H1 (cell line): ENCODE measurements at regions of chr3 and their contacts with region 1.

Region 1: DNA sequence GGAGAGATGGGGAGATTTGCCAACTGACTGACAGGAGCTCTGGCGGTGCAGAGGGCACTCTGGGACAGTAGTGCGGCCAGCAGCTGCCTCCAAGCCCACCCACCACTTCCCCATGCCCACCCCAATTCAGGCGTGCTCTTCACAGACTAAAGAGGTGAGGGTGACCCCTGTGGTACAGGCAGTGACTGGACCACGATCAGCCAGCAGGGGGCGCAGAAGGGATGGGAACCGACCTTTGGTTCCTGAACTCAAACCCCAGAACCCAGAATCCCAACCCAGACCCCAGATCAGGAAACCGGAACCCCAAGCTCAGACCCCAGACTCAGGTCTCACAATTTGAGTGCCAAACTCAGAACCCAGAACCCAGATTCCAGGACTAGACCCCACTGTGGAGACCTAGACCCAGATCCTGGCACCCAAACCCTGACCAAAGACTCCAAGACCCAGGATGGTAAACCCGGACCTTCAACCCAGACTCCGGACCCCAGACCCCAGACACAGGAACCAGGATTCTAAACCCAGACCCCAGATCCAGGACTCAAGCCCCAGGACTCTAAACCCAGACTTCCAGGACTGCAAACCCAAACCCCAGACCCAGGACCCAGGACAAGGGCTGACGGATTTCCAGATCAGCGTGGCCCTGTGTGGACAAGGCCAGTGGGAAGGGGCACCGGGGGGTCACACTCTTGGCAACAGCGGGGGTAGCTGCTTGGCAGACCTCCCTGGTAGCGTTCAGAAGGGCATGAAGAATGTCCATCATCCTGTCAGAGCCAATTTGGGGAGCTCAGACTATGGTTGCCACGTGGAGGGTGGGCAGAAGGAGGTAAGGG is 3.7 kb upstream of the MYL3 start:
- DNase-seq: peak in 1 of 2 experiments; percentile 97
- H3K4me3 ChIP-seq: no peak overlapping the region
- H3K27ac ChIP-seq: no peak overlapping the region
- H3K4me1 ChIP-seq: no peaks in the 10 kb centered on the region; a peak in 1 of 7 replicates
- H3K27me3 ChIP-seq: peaks cover 0 to 7% (median 2%) of the 10 kb centered on the region in 4 experiments; a peak in 3 of 7 replicates
- CTCF ChIP-seq: peak in 2 of 3 experiments; percentile 92 to 97; a peak in 3 of 4 replicates
- EP300 ChIP-seq: no peak
- POLR2A ChIP-seq: no peak
- RAD21 ChIP-seq: peak; percentile 76 to 84

Region 2: DNA sequence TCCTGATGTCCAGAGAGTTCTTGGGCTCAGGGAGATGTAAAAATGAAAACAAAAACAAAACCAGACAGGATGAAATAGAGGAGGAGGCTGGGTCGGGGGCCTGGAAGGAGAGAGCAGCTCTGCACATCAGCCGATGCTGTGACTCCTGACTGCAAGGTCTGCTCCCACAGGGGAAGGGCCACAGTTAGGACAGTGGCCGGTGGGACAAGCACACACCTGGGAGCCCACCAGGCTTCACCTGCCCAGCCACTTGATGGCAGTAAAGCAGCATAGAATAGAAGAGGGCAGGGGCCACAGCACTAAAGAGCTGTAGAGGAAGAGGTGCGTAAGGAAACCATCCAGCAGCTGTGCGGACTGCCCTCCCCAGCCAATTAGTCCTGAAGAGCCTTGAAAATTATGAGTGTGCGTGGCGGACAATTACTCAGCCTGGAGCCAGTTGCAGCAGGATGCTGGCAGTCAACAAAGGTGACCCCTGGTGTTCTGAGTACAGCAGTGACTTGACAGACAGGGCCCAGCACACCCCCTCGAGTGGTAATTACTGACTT is 203.3 kb before region 1 on chr3:
- CTCF ChIA-PET with region 1: interaction called, 10 read pairs
- POLR2A ChIA-PET with region 1: no interaction called
- DNase-seq: peak in 1 of 2 experiments; percentile 62
- H3K4me3 ChIP-seq: no peak overlapping the region
- H3K27ac ChIP-seq: no peak overlapping the region
- H3K4me1 ChIP-seq: peaks cover 22 to 41% (median 28%) of the 10 kb centered on the region in 4 experiments
- H3K27me3 ChIP-seq: no peaks in the 10 kb centered on the region; a peak in 1 of 7 replicates
- CTCF ChIP-seq: peak in 2 of 3 experiments; percentile 63 to 70; a peak in 3 of 4 replicates
- EP300 ChIP-seq: no peak
- POLR2A ChIP-seq: no peak
- RAD21 ChIP-seq: peak; percentile 72 to 83

Region 3: GRCh38 chr3:46717447-46718231 is 149.3 kb before region 1 on chr3 and contains the start of gene PRSS50:
- CTCF ChIA-PET with region 1: interaction called, 17 read pairs
- POLR2A ChIA-PET with region 1: no interaction called
- DNase-seq: peak in 1 of 2 experiments; percentile 96
- H3K4me3 ChIP-seq: no peak within 1 kb of the TSS
- H3K27ac ChIP-seq: no peak within 1 kb of the TSS
- H3K4me1 ChIP-seq: no peaks in the 10 kb centered on the region; a peak in 1 of 7 replicates
- H3K27me3 ChIP-seq: no peaks in the 10 kb centered on the region; a peak in 2 of 7 replicates
- CTCF ChIP-seq: peak in 2 of 3 experiments; percentile 98 to 100; a peak in 3 of 4 replicates
- EP300 ChIP-seq: peak in 1 of 2 experiments; percentile 37; a peak in 1 of 3 replicates
- POLR2A ChIP-seq: no peak
- RAD21 ChIP-seq: peak; percentile 56 to 69; a peak in 3 of 4 replicates
- total RNA-seq, gene PRSS50: 0.47 and 0.73 TPM in 2 replicates

Region 4: DNA sequence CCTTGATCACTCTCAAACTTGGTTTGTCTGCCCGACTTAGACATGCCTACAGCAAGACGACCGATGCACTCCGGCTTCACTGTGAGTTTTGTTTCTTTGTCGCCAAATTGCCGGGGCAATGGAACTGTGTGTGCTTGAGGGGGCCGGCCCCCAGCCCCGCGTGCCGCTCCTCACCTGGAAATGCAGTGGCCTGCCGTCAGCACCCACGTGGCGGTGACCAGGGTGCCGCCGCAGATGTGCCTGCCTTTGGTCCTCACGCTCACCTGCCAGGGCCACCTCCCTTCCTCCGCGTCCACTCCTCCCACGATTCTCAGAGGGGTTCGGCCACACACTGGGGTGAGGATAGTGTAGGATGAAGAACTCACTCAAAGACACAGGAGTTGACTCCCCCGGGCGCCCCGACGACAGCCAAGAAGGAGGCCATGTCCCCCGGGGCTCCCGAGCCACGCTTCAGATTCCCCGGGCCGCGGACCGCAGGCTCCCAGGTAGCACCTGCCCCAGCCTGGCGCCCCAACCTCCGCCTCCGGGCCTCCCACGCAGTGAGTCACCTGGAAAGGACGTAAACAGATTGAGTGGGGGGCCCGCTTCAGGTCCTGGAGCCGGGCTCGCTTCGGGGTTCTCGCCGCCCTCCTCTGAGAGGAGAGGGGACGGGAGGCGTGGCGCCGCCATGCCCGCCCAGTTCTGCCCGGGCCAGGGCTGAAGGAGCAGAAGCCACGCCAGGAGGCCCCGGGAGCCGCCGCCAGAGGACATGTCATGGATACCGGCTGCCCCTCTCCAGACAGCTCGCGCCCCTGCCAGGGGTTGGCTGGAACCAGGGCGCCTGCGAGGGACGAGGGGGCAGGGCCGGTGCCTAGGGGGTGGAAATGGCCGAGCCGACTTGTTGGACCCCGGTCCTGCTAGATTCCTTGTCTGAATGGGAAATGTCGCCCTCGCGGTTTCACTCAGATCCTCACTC is 33.3 kb before region 1 on chr3:
- CTCF ChIA-PET with region 1: no interaction called
- POLR2A ChIA-PET with region 1: no interaction called
- DNase-seq: no peak
- H3K4me3 ChIP-seq: no peak overlapping the region
- H3K27ac ChIP-seq: no peak overlapping the region
- H3K4me1 ChIP-seq: peaks cover 0 to 3% (median 0%) of the 10 kb centered on the region in 4 experiments; a peak in 1 of 7 replicates
- H3K27me3 ChIP-seq: no peaks in the 10 kb centered on the region; a peak in 1 of 7 replicates
- CTCF ChIP-seq: no peak
- EP300 ChIP-seq: no peak
- POLR2A ChIP-seq: no peak
- RAD21 ChIP-seq: no peak

Region 5: DNA sequence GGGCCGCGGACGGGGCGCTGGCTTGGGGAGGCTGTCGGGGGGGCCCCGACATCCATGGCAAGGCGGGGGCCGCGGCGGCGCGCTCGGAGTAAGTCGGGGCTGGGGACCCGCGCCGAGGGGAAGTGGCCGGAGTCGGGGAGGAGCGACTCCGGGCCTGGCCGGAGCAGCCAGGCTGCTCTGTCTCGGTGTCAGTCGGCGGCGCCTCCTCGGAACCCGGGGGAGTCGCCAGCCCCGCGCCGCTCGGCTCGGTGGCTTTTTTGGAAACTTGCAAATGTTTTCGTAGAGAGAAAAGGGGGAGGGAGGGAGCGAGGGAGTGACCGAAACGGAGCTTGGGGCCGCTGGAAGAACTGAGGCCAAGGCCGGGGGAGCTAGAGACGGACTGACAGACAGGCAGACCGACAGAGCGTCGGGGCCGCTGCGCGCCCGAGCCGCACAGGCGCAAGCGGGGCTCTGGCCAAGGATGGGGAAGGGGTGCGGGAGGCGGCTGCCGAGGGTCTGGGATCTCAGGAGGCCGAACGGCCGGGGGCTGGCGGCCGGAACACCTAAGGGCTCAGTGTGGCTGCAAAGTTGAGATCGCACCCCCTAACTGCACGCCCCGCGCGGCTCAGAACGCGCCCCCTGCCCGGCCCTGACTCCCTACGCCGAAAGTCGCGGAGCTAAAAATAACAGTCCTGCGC is 15.6 kb after region 1 on chr3:
- CTCF ChIA-PET with region 1: interaction called, 88 read pairs
- POLR2A ChIA-PET with region 1: interaction called, 5 read pairs
- DNase-seq: peak in 1 of 2 experiments; percentile 78
- H3K4me3 ChIP-seq: peak overlapping the region; percentile 57 to 75 (median 64)
- H3K27ac ChIP-seq: no peak overlapping the region
- H3K4me1 ChIP-seq: peaks cover 0 to 10% (median 5%) of the 10 kb centered on the region in 4 experiments; a peak in 6 of 7 replicates
- H3K27me3 ChIP-seq: peaks cover 53 to 93% (median 84%) of the 10 kb centered on the region in 4 experiments
- CTCF ChIP-seq: no peak
- EP300 ChIP-seq: no peak
- POLR2A ChIP-seq: no peak
- RAD21 ChIP-seq: no peak

Region 6: GRCh38 chr3:46909535-46910442 is 42.9 kb after region 1 on chr3:
- CTCF ChIA-PET with region 1: interaction called, 22 read pairs
- POLR2A ChIA-PET with region 1: interaction called, 3 read pairs
- DNase-seq: peak; percentile 65 to 95
- H3K4me3 ChIP-seq: no peak overlapping the region
- H3K27ac ChIP-seq: no peak overlapping the region
- H3K4me1 ChIP-seq: peaks cover 0 to 3% (median 1%) of the 10 kb centered on the region in 4 experiments; a peak in 2 of 7 replicates
- H3K27me3 ChIP-seq: no peaks in the 10 kb centered on the region; a peak in 2 of 7 replicates
- CTCF ChIP-seq: peak in 2 of 3 experiments; percentile 88 to 97; a peak in 3 of 4 replicates
- EP300 ChIP-seq: no peak
- POLR2A ChIP-seq: no peak
- RAD21 ChIP-seq: peak; percentile 97 to 98

Region 7: GRCh38 chr3:46943237-46944187 is 76.6 kb after region 1 on chr3:
- CTCF ChIA-PET with region 1: no interaction called
- POLR2A ChIA-PET with region 1: no interaction called
- DNase-seq: no peak
- H3K4me3 ChIP-seq: no peak overlapping the region
- H3K27ac ChIP-seq: no peak overlapping the region
- H3K4me1 ChIP-seq: peaks cover 5 to 14% (median 9%) of the 10 kb centered on the region in 4 experiments; a peak in 5 of 7 replicates
- H3K27me3 ChIP-seq: no peaks in the 10 kb centered on the region
- CTCF ChIP-seq: no peak
- EP300 ChIP-seq: no peak
- POLR2A ChIP-seq: no peak
- RAD21 ChIP-seq: no peak